ENCODE measurements at regions of chr10 and their contacts with region 1.

Region 1: GRCh38 chr10:5573968-5574641 is 49.3 kb downstream of the CALML3 start:
- DNase-seq: no peak
- H3K4me3 ChIP-seq: no peak overlapping the region
- H3K27ac ChIP-seq: no peak overlapping the region
- H3K4me1 ChIP-seq: peaks cover 0 to 14% of the 10 kb centered on the region in 2 donors
- H3K27me3 ChIP-seq: no peaks in the 10 kb centered on the region
- CTCF ChIP-seq: no peak

Region 2: DNA sequence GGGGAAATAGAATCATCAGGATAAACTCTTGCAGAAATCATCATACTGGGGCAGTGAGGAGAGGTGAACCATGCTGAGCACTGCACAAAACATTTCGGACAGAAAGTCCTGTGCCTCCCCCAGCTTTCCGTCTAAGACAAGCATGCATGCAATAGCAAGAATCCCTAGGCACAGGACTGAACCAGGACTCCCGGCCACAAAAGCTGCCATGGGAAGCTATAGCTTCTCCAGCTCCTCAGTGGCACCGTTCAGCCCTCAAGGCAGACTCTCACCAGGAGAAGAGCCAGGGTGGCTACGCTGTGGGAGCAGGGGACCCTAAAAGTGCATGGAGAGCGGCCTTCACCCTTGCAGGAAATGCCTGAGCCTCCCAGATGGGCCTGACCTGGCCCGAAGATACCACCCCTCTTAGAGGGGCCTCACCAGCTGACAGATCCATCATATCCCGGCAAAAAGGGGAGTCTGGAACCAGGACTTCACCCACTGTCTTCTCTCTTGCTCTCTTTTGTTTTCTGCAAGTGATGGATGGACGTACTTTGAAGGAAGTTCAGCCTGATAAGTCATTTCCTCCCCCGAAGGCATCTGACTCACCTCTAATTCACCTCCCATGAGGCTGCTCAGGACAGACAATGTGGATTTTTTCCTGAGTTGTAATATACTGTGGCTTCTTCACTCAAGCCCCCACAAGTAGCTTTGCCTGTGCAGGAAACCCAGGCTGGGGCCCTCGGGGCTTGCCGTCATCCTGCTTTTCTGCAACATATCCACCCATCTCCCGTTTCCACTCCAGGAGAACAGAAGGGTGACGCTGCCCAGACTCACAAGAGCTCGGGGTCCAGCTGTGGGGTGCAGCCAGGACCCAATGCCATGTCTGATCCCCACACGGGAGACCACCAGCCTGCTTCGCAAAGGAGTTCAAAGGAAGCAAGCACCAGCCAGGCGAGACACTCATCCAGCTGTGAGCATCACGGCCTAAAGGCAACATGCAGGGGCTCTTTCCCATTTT is 21.8 kb after region 1 on chr10:
- intact Hi-C with region 1: loop called (anchors 2 kb)
- DNase-seq: no peak
- H3K4me3 ChIP-seq: no peak overlapping the region
- H3K27ac ChIP-seq: peak overlapping the region in 1 of 2 donors; percentile 10
- H3K4me1 ChIP-seq: peaks cover 3 to 27% of the 10 kb centered on the region in 2 donors
- H3K27me3 ChIP-seq: no peaks in the 10 kb centered on the region
- CTCF ChIP-seq: no peak